Panc1 (cell line): ENCODE measurements at regions of chr12 and their contacts with region 1.

Region 1: GRCh38 chr12:71950819-71951218 is 12.2 kb downstream of the TPH2 start:
- DNase-seq: no peak
- ATAC-seq: no peak
- H3K4me3 ChIP-seq: no peak overlapping the region
- H3K27ac ChIP-seq: no peak overlapping the region
- H3K4me1 ChIP-seq: no peaks in the 10 kb centered on the region
- H3K27me3 ChIP-seq: peaks cover 7% of the 10 kb centered on the region; the same call in 1 of the 2 replicates
- CTCF ChIP-seq: no peak

Region 2: DNA sequence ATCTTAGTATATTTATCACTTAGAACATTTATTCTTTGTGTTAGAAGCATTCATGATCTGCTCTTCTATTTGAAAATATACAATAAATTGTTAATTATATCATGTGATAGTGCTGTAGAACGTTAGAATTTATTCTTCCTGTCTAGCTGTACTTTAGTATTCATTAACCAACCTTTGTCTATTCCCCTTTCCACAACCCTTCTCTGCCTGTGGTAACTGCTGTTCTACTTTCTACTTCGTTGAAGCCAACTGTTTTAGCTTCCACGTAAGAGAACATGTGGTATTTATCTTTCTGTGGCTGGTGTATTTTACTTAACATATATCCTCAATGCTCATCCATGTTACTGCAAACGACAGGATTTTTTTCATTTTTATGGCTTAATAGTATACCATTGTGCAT is 93.2 kb before region 1 on chr12:
- CTCF ChIA-PET with region 1: no interaction called
- POLR2A ChIA-PET with region 1: no interaction called
- in situ Hi-C with region 1: no loop called
- intact Hi-C with region 1: no loop called
- DNase-seq: no peak
- ATAC-seq: no peak
- H3K4me3 ChIP-seq: no peak overlapping the region
- H3K27ac ChIP-seq: no peak overlapping the region
- H3K4me1 ChIP-seq: no peaks in the 10 kb centered on the region
- H3K27me3 ChIP-seq: no peaks in the 10 kb centered on the region
- CTCF ChIP-seq: no peak

Region 3: GRCh38 chr12:71938728-71939385 is 12.0 kb before region 1 on chr12 and contains the start of gene TPH2:
- CTCF ChIA-PET with region 1: no interaction called
- POLR2A ChIA-PET with region 1: no interaction called
- in situ Hi-C with region 1: no loop called
- intact Hi-C with region 1: no loop called
- DNase-seq: no peak
- ATAC-seq: peak; percentile 56; the same call in 1 of the 2 replicates
- H3K4me3 ChIP-seq: no peak within 1 kb of the TSS; a peak in 1 of 4 replicates
- H3K27ac ChIP-seq: no peak within 1 kb of the TSS
- H3K4me1 ChIP-seq: no peaks in the 10 kb centered on the region; the same call in 1 of the 2 replicates
- H3K27me3 ChIP-seq: peaks cover 29% of the 10 kb centered on the region
- CTCF ChIP-seq: peak; percentile 64
- total RNA-seq, gene TPH2: not detected

Region 4: DNA sequence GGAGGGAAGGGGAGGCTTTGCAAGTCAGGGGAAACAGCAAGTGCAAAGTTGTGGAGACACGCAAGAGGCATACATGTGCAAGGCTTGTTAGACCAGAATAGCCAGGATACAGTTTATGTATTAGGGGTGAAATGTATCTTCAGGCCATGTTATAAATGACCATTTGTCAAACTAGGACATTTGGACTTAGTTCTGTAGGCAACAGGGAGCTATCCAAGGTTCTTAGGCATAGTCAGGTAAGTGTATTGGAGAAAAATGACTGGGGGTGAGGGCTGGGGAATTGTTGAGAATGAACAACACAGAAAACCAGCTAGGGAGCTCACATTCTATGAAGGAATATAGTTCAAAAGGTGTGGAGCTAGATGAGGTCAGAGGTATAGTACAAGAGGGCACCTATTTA is 30.3 kb after region 1 on chr12:
- CTCF ChIA-PET with region 1: interaction called, 12 read pairs
- POLR2A ChIA-PET with region 1: no interaction called
- in situ Hi-C with region 1: no loop called
- intact Hi-C with region 1: no loop called
- DNase-seq: no peak
- ATAC-seq: no peak
- H3K4me3 ChIP-seq: no peak overlapping the region
- H3K27ac ChIP-seq: no peak overlapping the region
- H3K4me1 ChIP-seq: no peaks in the 10 kb centered on the region
- H3K27me3 ChIP-seq: no peaks in the 10 kb centered on the region; the same call in 1 of the 2 replicates
- CTCF ChIP-seq: no peak